Breast epithelium (tissue), 4 donors: ENCODE measurements at regions of chr11 and their contacts with region 1.

Region 1: GRCh38 chr11:62905927-62906531 is 15.1 kb downstream of the CHRM1 start:
- DNase-seq: peak; percentile 74 to 84
- H3K4me3 ChIP-seq: no peak overlapping the region
- H3K27ac ChIP-seq: no peak overlapping the region
- H3K4me1 ChIP-seq: peaks cover 6 to 11% of the 10 kb centered on the region in 2 donors
- H3K27me3 ChIP-seq: no peaks in the 10 kb centered on the region
- CTCF ChIP-seq: peak; percentile 96 to 99 (median 97)
- POLR2A ChIP-seq: no peak

Region 2: DNA sequence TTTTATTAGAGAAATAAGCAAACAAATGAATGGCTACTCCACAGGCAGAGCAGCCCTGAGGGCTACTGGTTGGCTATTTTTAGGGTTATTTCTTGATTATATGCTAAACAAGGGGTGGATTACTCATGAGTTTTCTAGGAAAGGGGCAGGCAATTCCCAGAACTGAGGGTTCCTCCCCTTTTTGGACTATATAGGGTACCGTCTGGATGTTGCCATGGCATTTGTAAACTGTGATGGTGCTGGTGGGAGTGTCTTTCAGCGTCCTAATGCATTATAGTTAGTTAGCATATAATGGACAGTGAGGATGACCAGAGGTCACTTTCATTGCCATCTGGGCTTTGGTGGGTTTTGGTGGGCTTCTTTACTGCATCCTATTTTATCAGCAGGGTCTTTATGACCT is 59.5 kb after region 1 on chr11:
- intact Hi-C with region 1: no loop called
- DNase-seq: no peak
- H3K4me3 ChIP-seq: no peak overlapping the region
- H3K27ac ChIP-seq: no peak overlapping the region
- H3K4me1 ChIP-seq: no peaks in the 10 kb centered on the region
- H3K27me3 ChIP-seq: no peaks in the 10 kb centered on the region
- CTCF ChIP-seq: no peak
- POLR2A ChIP-seq: no peak

Region 3: GRCh38 chr11:62988276-62988675 is 82.2 kb after region 1 on chr11:
- intact Hi-C with region 1: no loop called
- DNase-seq: no peak
- H3K4me3 ChIP-seq: no peak overlapping the region
- H3K27ac ChIP-seq: no peak overlapping the region
- H3K4me1 ChIP-seq: no peaks in the 10 kb centered on the region
- H3K27me3 ChIP-seq: no peaks in the 10 kb centered on the region
- CTCF ChIP-seq: no peak
- POLR2A ChIP-seq: no peak

Region 4: GRCh38 chr11:63023841-63024648 is 118.0 kb after region 1 on chr11:
- intact Hi-C with region 1: loop called (anchors 5 kb)
- DNase-seq: peak; percentile 78 to 90
- H3K4me3 ChIP-seq: peak overlapping the region in 1 of 3 donors; percentile 12
- H3K27ac ChIP-seq: no peak overlapping the region
- H3K4me1 ChIP-seq: no peaks in the 10 kb centered on the region
- H3K27me3 ChIP-seq: no peaks in the 10 kb centered on the region
- CTCF ChIP-seq: peak; percentile 99
- POLR2A ChIP-seq: no peak